ENCODE measurements at regions of chr11 and their contacts with region 1.

Region 1: GRCh38 chr11:112113539-112114457 is 27.1 kb downstream of the SDHD start:
- DNase-seq: peak in 11 of 42 donors; percentile 13 to 65 (median 27)

Region 2: GRCh38 chr11:112174789-112175598 is 61.2 kb after region 1 on chr11 and contains the start of gene BCO2:
- intact Hi-C with region 1: loop called (anchors 5 kb)
- DNase-seq: peak; percentile 68 to 94 (median 85)

Region 3: GRCh38 chr11:112537846-112538330 is 424.1 kb after region 1 on chr11:
- intact Hi-C with region 1: no loop called
- DNase-seq: peak in 18 of 42 donors; percentile 16 to 73 (median 38)

Measured in head of caudate nucleus (tissue), 42 donors.